KBM-7 (cell line): ENCODE measurements at regions of chr1 and their contacts with region 1.

Region 1: DNA sequence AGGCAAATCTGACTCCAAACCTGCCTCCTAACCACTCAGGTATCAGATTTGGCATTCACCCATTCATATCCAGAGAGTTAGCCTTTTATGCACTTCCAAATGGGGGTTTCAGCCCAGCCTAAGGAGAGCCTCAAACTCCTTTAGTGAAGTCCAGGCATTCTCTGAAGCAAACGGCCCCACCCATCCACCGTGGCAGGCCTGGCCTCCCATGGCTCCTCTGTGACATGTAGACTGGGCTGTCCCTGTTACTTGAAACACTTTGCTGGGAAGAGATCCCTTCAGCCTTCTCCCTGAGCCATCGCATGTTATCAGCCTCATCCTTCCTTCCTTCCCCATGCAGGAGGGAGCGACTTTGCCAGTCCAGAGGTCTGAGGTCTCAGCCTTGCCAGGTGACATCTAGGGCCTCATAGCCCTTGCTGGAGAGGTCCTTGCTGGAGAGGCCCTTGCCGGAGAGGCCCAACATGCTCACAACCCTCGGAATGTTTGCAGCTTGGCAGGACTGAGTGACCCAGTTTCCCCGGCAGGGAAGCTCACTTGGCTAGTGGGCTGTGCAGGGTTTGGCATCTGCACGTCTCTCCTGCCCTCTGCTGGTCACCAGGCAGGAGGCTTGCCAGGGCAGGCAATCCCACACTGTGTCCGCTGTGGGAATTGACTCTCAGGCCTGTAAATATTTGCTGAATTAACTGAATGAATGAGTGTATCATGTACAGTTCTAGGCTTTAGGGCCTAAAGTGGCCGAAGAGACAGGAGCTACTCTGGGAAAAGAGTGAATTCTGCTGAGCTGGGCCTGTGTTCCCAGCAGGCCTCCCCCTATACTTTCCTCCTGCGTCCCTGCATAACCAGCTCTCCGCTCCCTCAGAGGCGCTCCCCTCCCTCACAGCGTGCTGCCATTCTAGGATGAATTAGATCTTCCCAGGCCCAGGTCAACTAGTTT is 26.7 kb upstream of the RBM15 start:
- DNase-seq: peak; percentile 71

Region 2: DNA sequence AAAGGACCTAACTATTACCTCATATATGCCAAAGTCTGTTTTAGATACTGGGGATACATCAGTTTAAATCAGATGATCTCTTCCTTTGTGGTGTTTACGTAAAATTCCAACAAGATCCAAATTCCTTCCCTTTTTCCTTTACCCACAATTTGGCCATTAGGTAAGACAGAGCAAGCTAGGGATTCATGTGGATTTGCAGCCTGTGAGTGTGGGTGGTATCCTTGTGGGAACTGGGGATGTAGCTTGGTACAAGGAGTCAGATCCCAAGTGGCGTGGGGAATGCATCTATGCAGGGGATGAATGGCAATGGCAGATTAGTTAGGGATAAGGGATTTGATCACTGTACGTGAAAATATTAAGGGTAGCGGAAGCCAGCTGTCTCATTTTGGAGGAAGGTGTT is 287.8 kb before region 1 on chr1:
- in situ Hi-C with region 1: no loop called
- DNase-seq: no peak

Region 3: DNA sequence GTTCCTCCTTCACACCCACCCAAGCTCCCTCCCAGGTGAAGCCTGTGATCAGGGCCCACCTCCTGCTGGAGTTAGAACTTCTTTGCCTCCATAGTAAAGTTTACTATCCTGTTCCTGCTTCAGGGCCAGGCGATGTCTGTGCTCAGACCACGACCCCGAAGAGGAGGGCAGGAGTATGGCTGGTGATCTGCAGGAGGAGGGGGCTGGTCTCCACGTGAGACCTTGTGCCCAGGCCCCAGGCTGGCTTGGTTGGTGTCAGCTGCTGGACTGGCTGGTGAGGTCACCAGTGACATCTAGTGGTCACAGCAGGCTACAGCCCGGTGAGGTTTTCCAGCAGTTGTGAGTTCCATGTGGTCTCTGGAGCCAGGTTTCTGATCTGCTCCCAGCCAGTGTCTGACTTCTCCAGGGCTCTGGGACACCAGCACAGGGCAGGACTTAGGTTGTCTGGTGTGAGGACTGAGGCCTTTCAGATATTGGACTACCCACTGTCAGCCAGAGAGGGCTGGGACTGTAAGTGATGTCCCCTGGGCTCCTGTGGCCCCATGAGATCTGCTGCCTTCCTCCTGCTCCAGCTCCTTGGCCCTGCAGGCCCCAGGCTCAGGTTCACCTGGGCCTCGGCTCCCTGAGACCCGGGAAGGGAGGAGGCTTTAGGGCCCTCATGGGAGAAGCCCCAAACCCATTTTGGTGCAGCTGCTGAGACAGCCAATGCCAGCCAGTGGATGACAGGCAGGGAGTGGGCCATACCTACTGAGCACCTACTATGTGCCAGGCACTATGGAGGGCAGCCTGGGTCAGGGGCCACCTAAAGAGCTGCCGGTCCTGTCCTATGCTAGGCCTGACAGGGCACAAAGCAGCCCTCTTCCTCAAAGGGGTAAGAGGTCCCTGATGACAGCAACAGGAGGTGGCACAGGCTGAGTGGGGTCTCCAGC is 206.2 kb before region 1 on chr1:
- in situ Hi-C with region 1: no loop called
- DNase-seq: peak; percentile 81

Region 4: GRCh38 chr1:110209715-110210603 is 102.5 kb before region 1 on chr1 and contains the start of gene KCNC4:
- in situ Hi-C with region 1: loop called (anchors 25 kb)
- DNase-seq: peak; percentile 90

Region 5: GRCh38 chr1:110356405-110356804 is 44.0 kb after region 1 on chr1:
- in situ Hi-C with region 1: no loop called
- DNase-seq: no peak